Esophagus muscularis mucosa (tissue), 4 donors: ENCODE measurements at regions of chr5 and their contacts with region 1.

Region 1: GRCh38 chr5:71508751-71509150 is 53.3 kb downstream of the BDP1 start:
- DNase-seq: no peak
- H3K4me3 ChIP-seq: no peak overlapping the region
- H3K27ac ChIP-seq: no peak overlapping the region
- H3K4me1 ChIP-seq: no peaks in the 10 kb centered on the region
- H3K27me3 ChIP-seq: no peaks in the 10 kb centered on the region
- CTCF ChIP-seq: no peak
- EP300 ChIP-seq: no peak
- POLR2A ChIP-seq: no peak

Region 2: GRCh38 chr5:71471193-71471592 is 37.6 kb before region 1 on chr5:
- intact Hi-C with region 1: loop called (anchors 5 kb)
- DNase-seq: no peak
- H3K4me3 ChIP-seq: no peak overlapping the region
- H3K27ac ChIP-seq: no peak overlapping the region
- H3K4me1 ChIP-seq: no peaks in the 10 kb centered on the region
- H3K27me3 ChIP-seq: no peaks in the 10 kb centered on the region
- CTCF ChIP-seq: no peak
- EP300 ChIP-seq: no peak
- POLR2A ChIP-seq: no peak

Region 3: DNA sequence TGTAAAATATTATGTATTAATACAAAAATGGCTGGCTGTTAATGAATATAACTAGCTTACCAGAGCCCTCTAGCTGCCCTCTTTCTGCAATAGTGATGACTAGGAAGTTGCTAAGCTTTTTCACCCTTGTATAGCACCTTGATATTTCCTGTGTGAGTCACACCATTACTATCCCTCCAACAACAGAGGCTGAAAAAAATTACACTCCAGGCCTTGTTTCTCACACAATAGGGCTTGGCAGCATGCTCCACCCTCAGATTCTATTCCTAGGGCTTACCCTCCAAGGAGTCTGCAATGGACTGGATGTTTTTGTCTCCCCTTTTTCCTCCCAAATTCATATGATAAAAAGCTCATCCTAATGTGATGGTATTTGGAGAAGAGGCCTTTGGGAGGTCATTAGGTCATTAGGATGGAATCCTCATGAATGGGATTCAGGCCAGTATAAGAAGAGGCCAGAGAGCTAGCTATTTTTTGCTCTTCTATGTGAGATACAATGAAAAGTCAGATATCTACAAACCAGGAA is 413.9 kb after region 1 on chr5:
- intact Hi-C with region 1: no loop called
- DNase-seq: peak; percentile 72
- H3K4me3 ChIP-seq: no peak overlapping the region
- H3K27ac ChIP-seq: peak overlapping the region; percentile 29 to 63 (median 38)
- H3K4me1 ChIP-seq: peaks cover 18 to 42% (median 36%) of the 10 kb centered on the region in 4 donors
- H3K27me3 ChIP-seq: no peaks in the 10 kb centered on the region
- CTCF ChIP-seq: peak in 1 of 3 experiments; percentile 26
- EP300 ChIP-seq: no peak
- POLR2A ChIP-seq: no peak

Region 4: DNA sequence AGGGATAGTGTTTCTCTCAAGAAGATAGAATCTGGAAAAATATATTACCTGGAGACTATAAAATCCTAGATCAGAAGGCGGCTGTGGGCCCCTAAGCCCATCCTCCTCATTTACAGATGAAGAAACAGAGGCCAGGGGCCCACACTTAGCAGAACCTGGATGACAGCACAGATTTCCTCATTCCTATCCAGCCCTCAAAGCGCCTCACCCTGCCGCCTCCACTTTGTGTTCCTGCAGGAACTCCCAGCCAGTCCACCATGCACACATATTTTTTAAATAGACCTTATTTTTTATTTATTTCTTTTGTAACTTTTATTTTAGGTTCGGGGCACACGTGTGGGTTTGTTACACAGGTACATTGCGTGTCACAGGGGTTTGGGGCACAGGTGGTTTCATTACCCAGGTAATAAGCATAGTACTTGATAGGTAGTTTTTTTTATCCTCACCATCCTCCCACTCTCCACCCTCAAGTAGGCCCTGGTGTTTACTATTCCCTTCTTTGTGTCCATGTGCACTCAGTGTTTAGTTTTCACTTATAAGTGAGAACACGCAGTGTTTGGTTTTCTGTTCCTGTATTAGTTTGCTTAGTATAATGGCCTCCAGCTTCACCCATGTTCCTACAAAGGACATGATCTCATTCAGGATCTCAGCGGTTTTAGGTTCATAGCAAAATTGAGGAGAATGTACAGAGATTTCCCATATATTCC is 513.1 kb after region 1 on chr5:
- intact Hi-C with region 1: no loop called
- DNase-seq: peak; percentile 83
- H3K4me3 ChIP-seq: no peak overlapping the region
- H3K27ac ChIP-seq: no peak overlapping the region
- H3K4me1 ChIP-seq: no peaks in the 10 kb centered on the region
- H3K27me3 ChIP-seq: no peaks in the 10 kb centered on the region
- CTCF ChIP-seq: no peak
- EP300 ChIP-seq: no peak
- POLR2A ChIP-seq: no peak